ENCODE measurements at regions of chr15 and their contacts with region 1.

Region 1: GRCh38 chr15:32664796-32665195 is 23.3 kb downstream of the SCG5 start:
- DNase-seq: no peak
- H3K4me3 Mint-ChIP-seq: no peak overlapping the region
- H3K27ac Mint-ChIP-seq: no peak overlapping the region
- H3K4me1 Mint-ChIP-seq: peaks cover 9% of the 10 kb centered on the region
- H3K27me3 Mint-ChIP-seq: no peaks in the 10 kb centered on the region
- CTCF ChIP-seq: no peak

Region 2: DNA sequence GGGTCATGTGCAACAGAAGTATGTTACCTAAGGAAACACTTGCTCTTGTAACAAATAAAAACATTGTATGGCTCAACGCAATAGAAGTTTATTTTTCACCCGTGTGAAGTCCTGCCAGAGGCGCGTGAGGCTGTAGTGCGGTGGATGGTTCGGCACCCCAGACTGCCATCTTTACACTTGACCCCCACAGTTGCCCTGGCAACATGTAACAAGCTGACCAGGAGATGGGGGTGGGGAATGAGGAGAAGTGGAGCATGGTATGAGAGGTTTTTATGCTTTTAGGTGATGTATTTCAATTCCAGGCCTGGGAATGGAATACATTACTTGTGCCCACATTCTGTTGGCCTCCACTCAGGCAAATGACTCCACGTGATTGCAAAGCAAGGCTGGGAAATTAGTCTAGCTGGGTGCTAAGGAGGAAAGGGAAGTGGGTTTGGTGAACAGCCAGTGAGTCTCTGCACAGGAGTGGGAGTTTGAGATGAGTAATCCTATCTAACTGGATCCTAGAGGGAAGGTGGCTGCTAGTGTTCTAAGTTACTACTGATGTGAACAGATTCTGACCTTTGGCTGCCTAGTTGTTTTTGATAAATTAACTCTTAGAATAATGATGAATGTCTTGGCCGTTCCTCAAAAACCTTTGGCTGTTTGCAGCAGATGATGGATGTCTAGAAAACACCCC is 19.2 kb after region 1 on chr15:
- CTCF ChIA-PET with region 1: interaction called, 28 read pairs
- POLR2A ChIA-PET with region 1: interaction called, 6 read pairs
- intact Hi-C with region 1: no loop called
- DNase-seq: peak; percentile 94
- H3K4me3 Mint-ChIP-seq: no peak overlapping the region
- H3K27ac Mint-ChIP-seq: no peak overlapping the region
- H3K4me1 Mint-ChIP-seq: peaks cover 64% of the 10 kb centered on the region
- H3K27me3 Mint-ChIP-seq: no peaks in the 10 kb centered on the region
- CTCF ChIP-seq: no peak

Region 3: GRCh38 chr15:32946210-32946609 is 281.4 kb after region 1 on chr15:
- CTCF ChIA-PET with region 1: interaction called, 151 read pairs
- POLR2A ChIA-PET with region 1: no interaction called
- intact Hi-C with region 1: no loop called
- DNase-seq: no peak
- H3K4me3 Mint-ChIP-seq: no peak overlapping the region
- H3K27ac Mint-ChIP-seq: no peak overlapping the region
- H3K4me1 Mint-ChIP-seq: no peaks in the 10 kb centered on the region
- H3K27me3 Mint-ChIP-seq: no peaks in the 10 kb centered on the region
- CTCF ChIP-seq: no peak

Region 4: DNA sequence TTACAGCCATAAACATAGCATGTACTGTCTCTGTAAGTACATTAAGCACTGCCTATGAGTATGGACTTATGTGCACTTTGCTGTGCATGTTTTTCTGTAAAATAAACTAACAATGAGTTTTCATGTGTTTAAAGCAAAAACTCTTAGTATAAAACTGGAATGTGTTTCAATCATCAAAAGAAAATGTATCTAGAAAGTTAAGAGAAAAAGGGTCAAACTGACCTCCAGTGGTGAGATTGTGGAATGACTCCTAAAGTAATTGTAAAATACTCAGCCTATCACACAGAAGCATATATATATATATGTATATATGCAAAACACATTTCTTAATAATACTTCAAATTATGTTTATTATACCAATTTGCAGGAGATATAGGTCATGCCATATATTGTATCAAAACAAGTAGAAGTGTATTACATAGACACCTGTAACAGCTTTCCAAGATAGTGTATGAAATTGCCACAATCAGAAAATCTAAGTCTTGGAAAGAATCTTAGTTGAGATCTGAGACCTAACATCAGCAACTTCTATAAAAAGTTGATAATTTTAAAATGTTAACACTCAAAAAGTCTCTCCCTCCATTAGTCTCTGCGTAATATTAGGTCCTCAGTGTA is 330.1 kb after region 1 on chr15:
- CTCF ChIA-PET with region 1: interaction called, 89 read pairs
- POLR2A ChIA-PET with region 1: interaction called, 4 read pairs
- intact Hi-C with region 1: loop called (anchors 1 kb)
- DNase-seq: peak; percentile 52
- H3K4me3 Mint-ChIP-seq: no peak overlapping the region
- H3K27ac Mint-ChIP-seq: no peak overlapping the region
- H3K4me1 Mint-ChIP-seq: no peaks in the 10 kb centered on the region
- H3K27me3 Mint-ChIP-seq: no peaks in the 10 kb centered on the region
- CTCF ChIP-seq: peak; percentile 47

Measured in MCF 10A (cell line).